Endothelial cell of umbilical vein (primary cell): ENCODE measurements at regions of chr20 and their contacts with region 1.

Region 1: DNA sequence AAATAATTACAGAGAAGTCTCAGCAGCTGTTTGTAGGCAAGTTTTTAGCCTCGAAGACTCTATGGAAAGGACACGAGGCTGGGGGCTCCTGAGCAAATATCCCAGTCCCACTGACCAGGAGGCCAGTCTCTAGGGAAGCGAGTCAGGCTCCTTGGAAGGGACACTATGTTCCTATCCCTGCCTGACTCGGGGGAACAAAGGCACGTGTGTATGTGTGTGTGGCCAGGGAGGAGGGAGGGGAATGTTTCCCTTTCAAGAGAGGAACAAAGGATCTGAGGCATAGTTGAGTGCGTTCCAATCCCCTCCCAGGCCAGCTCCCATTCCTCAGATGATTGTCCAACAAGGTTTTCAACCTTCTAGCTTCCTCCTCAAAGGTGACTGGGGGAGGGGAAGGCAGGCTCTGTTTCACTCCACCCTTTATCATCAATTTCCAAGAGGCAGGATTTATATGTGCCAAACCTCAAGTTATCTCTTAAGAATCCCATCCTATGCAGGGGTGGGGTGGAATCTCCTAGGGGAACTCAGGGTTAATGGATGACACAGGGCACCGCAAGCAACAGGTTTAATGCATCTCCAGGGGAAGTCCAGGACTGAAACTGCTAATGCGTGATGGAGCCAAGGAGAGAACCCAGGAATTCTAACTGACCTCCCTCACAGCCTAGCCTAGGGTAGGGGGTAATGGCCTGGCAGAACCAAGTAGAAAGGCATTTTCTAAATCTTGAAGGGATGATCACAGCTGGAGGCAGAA is 9.9 kb downstream of the BCL2L1 start:
- DNase-seq: peak; percentile 91
- H3K4me3 ChIP-seq: peak overlapping the region in 1 of 3 experiments; percentile 26
- H3K27ac ChIP-seq: peak overlapping the region; percentile 97
- H3K4me1 ChIP-seq: peaks cover 55% of the 10 kb centered on the region
- H3K27me3 ChIP-seq: no peaks in the 10 kb centered on the region
- CTCF ChIP-seq: no peak
- POLR2A ChIP-seq: no peak

Region 2: DNA sequence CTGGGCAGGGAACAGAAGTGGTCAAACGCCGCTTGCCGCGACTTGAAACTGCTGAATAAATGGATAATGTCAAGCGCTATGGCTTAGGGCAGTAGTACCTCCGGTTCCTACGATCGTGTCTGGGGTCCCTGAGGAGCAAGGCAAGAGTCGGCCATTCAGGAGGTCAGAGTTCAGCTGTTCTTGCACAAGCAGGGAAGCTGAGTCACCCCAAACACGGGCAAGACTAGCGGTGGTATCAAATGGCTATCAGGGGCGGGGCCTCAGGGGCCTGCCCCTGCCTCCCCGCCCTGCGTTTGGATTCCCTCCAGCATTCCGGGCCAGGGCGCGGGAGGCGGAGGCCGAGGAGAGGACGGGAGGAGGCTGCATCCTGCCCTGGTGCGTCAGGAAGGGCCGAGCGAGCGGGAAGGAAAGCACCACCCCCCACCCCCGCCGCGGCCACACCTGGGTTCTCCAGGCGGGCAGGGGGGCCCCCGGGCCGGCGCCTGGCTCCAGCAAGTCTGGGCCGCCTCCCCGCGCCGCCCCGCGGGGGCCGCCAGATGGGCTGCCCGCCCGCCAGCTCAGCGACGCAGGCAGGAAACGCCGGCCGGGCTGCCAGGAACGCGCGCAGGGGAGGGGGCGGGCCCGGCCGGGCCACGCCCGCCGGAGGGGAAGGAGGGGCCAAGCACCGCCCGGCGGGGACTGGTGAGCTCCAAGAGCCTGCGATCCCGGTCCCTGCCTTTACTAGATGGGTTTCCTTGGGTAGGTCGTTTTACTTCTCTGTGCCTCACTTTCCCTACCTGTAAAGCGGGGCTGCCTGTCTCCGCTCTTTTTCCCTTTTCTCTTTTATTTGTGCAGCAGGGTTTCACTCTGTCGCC is 139.8 kb before region 1 on chr20:
- CTCF ChIA-PET with region 1: no interaction called
- POLR2A ChIA-PET with region 1: no interaction called
- dilution Hi-C with region 1: no loop called
- intact Hi-C with region 1: loop called (anchors 1 kb)
- DNase-seq: peak; percentile 99
- H3K4me3 ChIP-seq: peak overlapping the region; percentile 22 to 52 (median 31)
- H3K27ac ChIP-seq: peak overlapping the region; percentile 94
- H3K4me1 ChIP-seq: peaks cover 36% of the 10 kb centered on the region
- H3K27me3 ChIP-seq: no peaks in the 10 kb centered on the region
- CTCF ChIP-seq: no peak
- POLR2A ChIP-seq: peak; percentile 92

Region 3: DNA sequence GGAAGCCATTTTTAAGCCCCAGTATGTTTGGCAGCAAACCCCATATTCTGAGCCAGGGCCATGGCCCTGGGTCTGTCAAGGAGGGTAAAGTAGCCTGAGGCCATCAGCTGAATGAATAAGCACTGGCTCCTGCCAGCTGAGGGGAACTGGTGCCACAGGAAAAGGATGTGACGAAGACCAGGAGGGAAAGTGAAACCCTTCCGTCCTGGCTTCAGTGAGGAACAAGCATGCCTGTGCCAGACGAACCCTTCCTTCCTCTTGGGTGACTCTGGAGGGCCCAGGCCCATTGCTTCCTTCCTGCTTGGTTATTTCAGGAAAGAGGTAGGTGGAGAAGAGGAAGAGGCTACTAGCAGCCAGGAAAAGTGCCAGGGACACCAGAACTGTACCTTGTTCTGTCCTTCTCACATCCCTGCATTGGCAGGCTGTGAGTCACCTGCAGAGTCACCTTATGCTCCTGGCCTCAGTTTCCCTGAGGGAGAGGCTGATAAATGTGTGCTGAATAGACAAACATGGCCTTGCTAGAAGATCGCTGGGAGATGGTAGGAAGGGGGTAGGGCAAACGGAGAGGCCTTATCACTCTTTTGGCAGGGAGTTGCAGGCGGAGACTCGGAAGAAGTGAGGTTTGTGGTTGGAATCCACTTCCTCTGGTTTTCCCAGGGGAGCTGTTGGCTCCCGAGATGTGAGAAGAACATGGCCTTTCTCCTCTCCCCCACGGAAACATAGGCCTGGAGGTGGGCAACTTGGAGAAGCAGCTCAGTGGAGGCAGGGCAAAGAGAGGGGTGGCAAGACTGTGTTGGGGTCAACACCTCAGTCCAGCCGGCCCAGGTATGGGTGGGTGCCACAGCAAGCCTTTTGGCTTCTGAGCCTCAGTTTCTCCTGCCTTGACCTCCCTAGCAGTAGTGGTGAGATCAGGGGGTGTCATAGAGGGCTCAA is 37.6 kb before region 1 on chr20:
- CTCF ChIA-PET with region 1: interaction called, 20 read pairs
- POLR2A ChIA-PET with region 1: interaction called, 4 read pairs
- dilution Hi-C with region 1: no loop called
- intact Hi-C with region 1: loop called (anchors 1 kb)
- DNase-seq: peak; percentile 84
- H3K4me3 ChIP-seq: peak overlapping the region in 1 of 3 experiments; percentile 20
- H3K27ac ChIP-seq: peak overlapping the region; percentile 93
- H3K4me1 ChIP-seq: peaks cover 60% of the 10 kb centered on the region
- H3K27me3 ChIP-seq: no peaks in the 10 kb centered on the region
- CTCF ChIP-seq: no peak
- POLR2A ChIP-seq: peak; percentile 27

Region 4: DNA sequence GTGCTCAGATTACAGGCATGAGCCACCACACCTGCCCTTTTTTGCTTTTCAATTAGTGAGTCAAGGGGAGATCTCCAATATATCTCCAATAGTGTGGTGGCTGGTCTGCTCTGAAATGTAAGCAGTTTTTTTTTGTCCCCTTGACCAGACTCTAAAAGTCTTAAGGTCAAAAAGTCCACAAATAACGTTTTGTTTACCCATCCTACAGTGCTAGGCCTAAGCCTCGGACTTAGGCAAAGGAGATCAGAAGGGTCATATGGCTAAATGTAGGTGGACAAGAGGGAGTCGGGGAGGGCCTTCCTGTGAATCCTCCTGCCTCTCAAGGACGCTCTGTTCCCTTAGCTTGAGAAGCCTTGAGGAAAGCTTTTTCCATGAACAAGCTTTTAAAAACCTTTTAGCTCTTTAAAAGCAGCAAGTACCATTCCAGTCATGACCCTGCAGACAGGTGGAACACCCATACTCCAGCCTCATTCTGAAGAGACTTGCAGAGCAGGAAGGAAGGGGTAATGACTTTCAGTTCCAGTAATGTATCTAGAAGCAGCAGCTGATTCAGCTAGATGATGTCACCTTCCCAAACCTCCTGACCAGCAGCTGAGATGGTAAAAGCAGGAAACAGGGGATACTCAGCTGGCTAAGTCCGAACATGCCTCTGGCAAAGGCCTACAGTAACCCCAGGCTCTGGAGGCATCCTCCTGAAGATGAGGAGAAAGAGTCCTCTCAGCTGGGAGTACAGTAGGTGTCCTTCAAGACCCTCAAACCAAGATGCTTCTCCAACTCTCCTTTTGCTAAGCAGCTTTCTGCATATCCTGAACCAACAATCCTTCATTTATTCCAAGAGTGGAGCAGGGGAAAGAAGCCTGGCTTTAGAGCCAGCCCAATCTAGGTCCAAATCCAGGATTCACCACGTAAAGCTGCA is 13.7 kb before region 1 on chr20:
- CTCF ChIA-PET with region 1: interaction called, 16 read pairs
- POLR2A ChIA-PET with region 1: interaction called, 6 read pairs
- dilution Hi-C with region 1: no loop called
- intact Hi-C with region 1: loop called (anchors 1 kb)
- DNase-seq: peak; percentile 96
- H3K4me3 ChIP-seq: no peak overlapping the region
- H3K27ac ChIP-seq: peak overlapping the region; percentile 86
- H3K4me1 ChIP-seq: peaks cover 52% of the 10 kb centered on the region
- H3K27me3 ChIP-seq: no peaks in the 10 kb centered on the region
- CTCF ChIP-seq: no peak
- POLR2A ChIP-seq: peak; percentile 42

Region 5: DNA sequence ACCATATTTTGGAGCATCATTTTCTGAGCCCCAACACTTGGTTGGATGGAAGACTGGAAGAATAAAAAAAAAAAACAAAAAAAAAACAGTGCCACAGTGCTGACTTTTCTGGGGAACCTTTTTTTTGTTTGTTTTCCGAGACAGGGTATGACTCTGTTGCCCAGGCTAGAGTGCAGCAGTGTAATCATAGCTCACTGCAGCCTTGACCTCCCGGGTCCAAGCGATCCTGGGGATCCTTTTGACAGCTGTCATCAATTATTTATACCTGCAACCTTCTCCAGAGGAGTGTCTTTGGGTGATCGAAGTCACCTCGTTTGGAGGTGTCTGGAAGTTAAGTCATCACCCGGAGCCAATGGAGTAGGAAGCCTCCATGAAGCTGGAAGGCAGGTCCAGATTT is 18.6 kb after region 1 on chr20:
- CTCF ChIA-PET with region 1: no interaction called
- POLR2A ChIA-PET with region 1: no interaction called
- dilution Hi-C with region 1: no loop called
- intact Hi-C with region 1: no loop called
- DNase-seq: no peak
- H3K4me3 ChIP-seq: no peak overlapping the region
- H3K27ac ChIP-seq: no peak overlapping the region
- H3K4me1 ChIP-seq: no peaks in the 10 kb centered on the region
- H3K27me3 ChIP-seq: no peaks in the 10 kb centered on the region
- CTCF ChIP-seq: no peak
- POLR2A ChIP-seq: no peak